ENCODE measurements at regions of chr11 and their contacts with region 1.

Region 1: GRCh38 chr11:95089620-95090542 is at the start of gene ENDOD1:
- DNase-seq: peak; percentile 89
- H3K4me3 Mint-ChIP-seq: peak within 1 kb of the TSS; percentile 86
- H3K27ac Mint-ChIP-seq: peak within 1 kb of the TSS; percentile 98
- H3K4me1 Mint-ChIP-seq: peaks cover 56% of the 10 kb centered on the region
- H3K27me3 Mint-ChIP-seq: no peaks in the 10 kb centered on the region

Region 2: DNA sequence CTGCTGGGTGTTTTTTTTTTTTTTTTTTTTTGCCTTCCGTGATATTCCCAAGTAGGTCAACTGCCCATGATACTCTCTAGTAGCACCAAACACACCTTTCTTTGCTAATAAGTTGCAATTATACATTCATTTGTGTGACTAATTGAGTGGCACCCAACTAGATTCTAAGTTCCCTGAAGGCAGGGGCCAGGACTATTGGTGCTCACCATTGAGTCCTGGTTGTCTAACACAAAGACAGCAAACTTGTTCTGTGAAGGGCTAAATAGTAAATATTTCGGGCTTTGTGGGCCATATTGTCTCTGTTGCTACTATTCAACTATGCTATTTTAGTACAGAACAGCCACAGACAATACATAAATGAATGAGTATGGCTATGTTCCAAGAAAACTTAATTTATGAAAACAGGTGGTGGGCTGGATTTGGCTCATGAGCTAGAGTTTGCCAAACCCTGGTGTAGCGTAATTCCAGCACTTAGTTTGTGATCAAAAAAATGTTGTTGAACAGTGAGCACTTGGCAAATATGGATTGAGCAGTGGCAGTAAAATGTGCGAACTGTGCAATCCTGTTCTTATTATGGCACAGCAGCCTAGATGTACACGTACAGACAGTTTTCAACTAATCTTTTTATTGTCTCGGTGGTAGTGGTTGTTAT is 11.1 kb after region 1 on chr11:
- CTCF ChIA-PET with region 1: interaction called, 18 read pairs
- DNase-seq: no peak
- H3K4me3 Mint-ChIP-seq: no peak overlapping the region
- H3K27ac Mint-ChIP-seq: no peak overlapping the region
- H3K4me1 Mint-ChIP-seq: peaks cover 13% of the 10 kb centered on the region
- H3K27me3 Mint-ChIP-seq: no peaks in the 10 kb centered on the region

Region 3: GRCh38 chr11:95138448-95138847 is 48.6 kb after region 1 on chr11:
- CTCF ChIA-PET with region 1: interaction called, 12 read pairs
- DNase-seq: no peak
- H3K4me3 Mint-ChIP-seq: no peak overlapping the region
- H3K27ac Mint-ChIP-seq: no peak overlapping the region
- H3K4me1 Mint-ChIP-seq: peaks cover 6% of the 10 kb centered on the region
- H3K27me3 Mint-ChIP-seq: peaks cover 23% of the 10 kb centered on the region

Region 4: DNA sequence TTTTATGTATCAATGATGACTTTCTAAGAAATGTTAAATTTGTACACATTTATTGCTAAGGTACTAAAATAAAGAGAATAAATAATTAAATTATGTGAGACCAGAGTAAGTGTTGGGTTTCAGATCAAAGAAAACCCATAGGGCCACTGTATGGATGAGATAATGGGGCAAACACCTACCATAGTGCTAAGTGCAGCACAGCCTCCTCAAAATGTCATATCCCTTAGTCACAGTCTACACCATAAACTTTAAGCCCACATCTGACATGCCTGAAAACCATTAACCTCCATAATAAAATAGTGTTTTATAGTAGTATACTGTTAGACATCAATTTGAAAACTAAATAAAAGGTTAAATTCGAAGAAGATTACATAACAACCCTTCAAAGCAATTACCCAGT is 103.7 kb after region 1 on chr11:
- CTCF ChIA-PET with region 1: no interaction called
- DNase-seq: no peak
- H3K4me3 Mint-ChIP-seq: no peak overlapping the region
- H3K27ac Mint-ChIP-seq: no peak overlapping the region
- H3K4me1 Mint-ChIP-seq: peaks cover 8% of the 10 kb centered on the region
- H3K27me3 Mint-ChIP-seq: no peaks in the 10 kb centered on the region

Measured in activated naive CD4-positive, alpha-beta T cell treated with anti-CD3 and anti-CD28 coated beads, Interleukin-2, amount 10 ng/mL, durations not matched to agents 7 days and 5 days (primary cell).